ENCODE measurements at regions of chr14 and their contacts with region 1.

Region 1: DNA sequence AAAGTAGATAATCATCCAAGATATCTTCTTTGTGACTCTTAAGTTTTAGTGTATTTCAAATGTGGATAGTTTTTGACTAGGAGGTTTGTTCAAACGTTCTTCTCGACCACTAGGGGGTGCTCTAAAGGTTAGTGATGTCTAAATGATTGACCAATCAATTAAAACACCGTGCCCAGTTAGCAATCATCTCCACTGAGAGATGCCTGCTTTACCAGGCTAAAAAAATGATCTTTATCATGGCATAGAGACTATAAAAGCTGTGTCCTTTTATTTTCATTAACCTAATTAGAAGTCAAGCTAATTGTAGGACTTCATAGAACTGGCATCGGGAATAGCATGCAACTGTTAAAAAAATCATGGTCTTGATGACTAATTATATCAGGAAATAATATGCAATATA is 153.9 kb downstream of the PRKCH start:
- DNase-seq: peak in 3 of 5 donors; percentile 38 to 52 (median 40)
- H3K4me3 ChIP-seq: no peak overlapping the region
- H3K4me3 Mint-ChIP-seq: peak overlapping the region in 6 of 8 donors; percentile 25 to 81 (median 48)
- H3K27ac ChIP-seq: peak overlapping the region; percentile 87
- H3K27ac Mint-ChIP-seq: peak overlapping the region; percentile 87 to 100 (median 93)
- H3K4me1 ChIP-seq: peaks cover 98% of the 10 kb centered on the region
- H3K4me1 Mint-ChIP-seq: peaks cover 76 to 97% (median 92%) of the 10 kb centered on the region in 4 donors
- H3K27me3 ChIP-seq: no peaks in the 10 kb centered on the region
- H3K27me3 Mint-ChIP-seq: no peaks in the 10 kb centered on the region

Region 2: DNA sequence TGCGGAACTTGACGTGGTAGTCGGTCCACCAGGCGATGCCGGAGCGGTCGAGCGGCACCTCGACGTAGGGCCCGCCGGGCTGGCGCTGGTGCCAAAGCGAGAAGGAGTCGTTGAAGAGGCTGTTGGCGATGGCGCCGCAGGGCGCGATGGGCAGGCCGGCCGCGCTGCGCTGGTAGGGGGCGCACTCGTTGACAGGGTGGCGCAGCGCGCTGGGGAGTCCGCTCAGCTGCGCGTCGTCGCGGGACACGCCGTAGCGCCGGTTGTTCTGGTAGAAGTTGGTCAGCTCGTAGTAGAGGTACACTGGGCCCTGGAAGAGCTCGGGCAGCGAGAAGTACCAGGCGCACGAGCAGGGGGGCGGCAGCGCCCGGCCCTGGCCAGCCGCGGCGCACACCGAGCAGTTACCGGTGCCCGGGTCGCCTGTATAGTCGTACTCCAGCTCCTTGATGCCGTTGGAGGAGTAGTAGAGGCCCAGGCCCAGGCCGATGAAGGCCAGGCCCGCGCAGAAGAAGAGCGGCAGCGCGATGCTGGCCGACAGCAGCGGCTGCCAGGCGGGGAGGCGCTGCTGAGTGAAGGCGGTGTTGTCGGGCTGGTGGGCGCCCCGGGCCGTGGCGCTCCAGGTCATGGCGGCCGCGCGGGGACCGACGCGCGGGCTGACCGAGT is 194.7 kb before region 1 on chr14:
- CTCF ChIA-PET with region 1: interaction called, 3 read pairs
- POLR2A ChIA-PET with region 1: interaction called, 10 read pairs
- intact Hi-C with region 1: no loop called
- DNase-seq: peak; percentile 73 to 81 (median 78)
- H3K4me3 ChIP-seq: peak overlapping the region; percentile 45 to 76
- H3K4me3 Mint-ChIP-seq: peak overlapping the region; percentile 90 to 95 (median 93)
- H3K27ac ChIP-seq: peak overlapping the region; percentile 65
- H3K27ac Mint-ChIP-seq: peak overlapping the region; percentile 87 to 96 (median 94)
- H3K4me1 ChIP-seq: peaks cover 16% of the 10 kb centered on the region
- H3K4me1 Mint-ChIP-seq: peaks cover 19 to 38% (median 24%) of the 10 kb centered on the region in 4 donors
- H3K27me3 ChIP-seq: no peaks in the 10 kb centered on the region
- H3K27me3 Mint-ChIP-seq: no peaks in the 10 kb centered on the region

Region 3: DNA sequence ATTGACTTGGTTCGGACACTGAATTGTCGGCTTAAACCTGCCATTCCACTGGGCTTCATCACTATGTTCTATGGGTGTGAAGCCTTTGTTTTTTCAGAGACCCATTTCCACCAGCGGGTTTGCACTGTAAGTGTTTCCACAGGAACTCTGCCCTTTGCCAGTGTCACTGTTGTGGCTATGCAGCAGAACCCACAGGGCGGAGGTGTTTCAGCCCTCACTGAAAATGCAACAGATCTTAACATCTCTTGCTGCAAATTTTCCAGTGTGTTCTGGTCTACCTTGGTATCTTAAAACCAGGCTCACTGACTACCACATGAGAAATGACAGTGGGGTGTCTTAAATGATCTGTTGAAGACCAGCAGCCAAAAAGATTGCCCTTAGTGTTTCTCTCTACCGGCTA is 132.8 kb before region 1 on chr14:
- CTCF ChIA-PET with region 1: interaction called, 4 read pairs
- POLR2A ChIA-PET with region 1: interaction called, 11 read pairs
- intact Hi-C with region 1: no loop called
- DNase-seq: peak; percentile 87 to 95 (median 88)
- H3K4me3 ChIP-seq: peak overlapping the region; percentile 25 to 42
- H3K4me3 Mint-ChIP-seq: peak overlapping the region; percentile 72 to 92 (median 82)
- H3K27ac ChIP-seq: peak overlapping the region; percentile 78
- H3K27ac Mint-ChIP-seq: peak overlapping the region; percentile 93 to 98 (median 98)
- H3K4me1 ChIP-seq: peaks cover 97% of the 10 kb centered on the region
- H3K4me1 Mint-ChIP-seq: peaks cover 82 to 95% (median 88%) of the 10 kb centered on the region in 4 donors
- H3K27me3 ChIP-seq: no peaks in the 10 kb centered on the region
- H3K27me3 Mint-ChIP-seq: no peaks in the 10 kb centered on the region

Region 4: GRCh38 chr14:61372842-61373555 is 102.3 kb before region 1 on chr14:
- CTCF ChIA-PET with region 1: no interaction called
- POLR2A ChIA-PET with region 1: no interaction called
- intact Hi-C with region 1: no loop called
- DNase-seq: no peak
- H3K4me3 ChIP-seq: no peak overlapping the region
- H3K4me3 Mint-ChIP-seq: peak overlapping the region in 6 of 8 donors; percentile 15 to 74 (median 38)
- H3K27ac ChIP-seq: no peak overlapping the region
- H3K27ac Mint-ChIP-seq: peak overlapping the region in 6 of 7 donors; percentile 1 to 93 (median 70)
- H3K4me1 ChIP-seq: peaks cover 83% of the 10 kb centered on the region
- H3K4me1 Mint-ChIP-seq: peaks cover 43 to 73% (median 59%) of the 10 kb centered on the region in 4 donors
- H3K27me3 ChIP-seq: no peaks in the 10 kb centered on the region
- H3K27me3 Mint-ChIP-seq: no peaks in the 10 kb centered on the region

Region 5: DNA sequence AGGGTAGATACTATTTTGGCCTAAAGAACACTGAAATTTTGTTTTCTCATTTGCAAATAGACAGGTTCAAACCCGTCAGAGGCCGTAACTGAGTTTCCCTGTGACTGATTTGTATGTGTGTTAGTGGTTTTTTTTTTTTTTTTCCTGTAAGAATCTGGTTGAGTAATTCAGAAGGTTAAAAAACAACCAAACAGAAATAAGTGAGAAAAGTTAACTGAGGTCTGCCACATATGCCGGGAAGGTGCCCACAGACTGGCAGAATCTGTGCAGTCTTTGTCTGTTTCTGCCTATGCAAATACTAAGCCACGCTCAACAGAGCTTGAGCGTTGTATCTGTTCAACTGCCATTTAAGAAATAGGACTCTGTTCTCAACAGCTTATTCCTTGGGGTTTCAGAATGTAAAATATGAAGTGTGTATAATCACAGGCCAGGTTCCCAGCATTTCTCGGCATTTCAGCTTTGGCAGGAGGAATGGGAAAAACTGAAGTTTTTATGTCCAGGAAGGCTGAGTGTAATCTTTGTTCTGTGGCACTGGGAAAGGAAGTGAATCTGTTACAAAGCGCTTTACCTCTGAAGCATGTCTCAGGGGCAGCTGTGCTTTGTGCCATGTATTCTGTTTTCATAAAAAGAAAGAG is 28.0 kb after region 1 on chr14:
- CTCF ChIA-PET with region 1: interaction called, 66 read pairs
- POLR2A ChIA-PET with region 1: interaction called, 81 read pairs
- intact Hi-C with region 1: loop called (anchors 1 kb)
- DNase-seq: peak; percentile 58 to 76 (median 64)
- H3K4me3 ChIP-seq: no peak overlapping the region
- H3K4me3 Mint-ChIP-seq: peak overlapping the region; percentile 53 to 86 (median 76)
- H3K27ac ChIP-seq: peak overlapping the region; percentile 55
- H3K27ac Mint-ChIP-seq: peak overlapping the region in 6 of 7 donors; percentile 96 to 100 (median 98)
- H3K4me1 ChIP-seq: peaks cover 100% of the 10 kb centered on the region
- H3K4me1 Mint-ChIP-seq: peaks cover 68 to 99% (median 89%) of the 10 kb centered on the region in 4 donors
- H3K27me3 ChIP-seq: no peaks in the 10 kb centered on the region
- H3K27me3 Mint-ChIP-seq: no peaks in the 10 kb centered on the region

Region 6: DNA sequence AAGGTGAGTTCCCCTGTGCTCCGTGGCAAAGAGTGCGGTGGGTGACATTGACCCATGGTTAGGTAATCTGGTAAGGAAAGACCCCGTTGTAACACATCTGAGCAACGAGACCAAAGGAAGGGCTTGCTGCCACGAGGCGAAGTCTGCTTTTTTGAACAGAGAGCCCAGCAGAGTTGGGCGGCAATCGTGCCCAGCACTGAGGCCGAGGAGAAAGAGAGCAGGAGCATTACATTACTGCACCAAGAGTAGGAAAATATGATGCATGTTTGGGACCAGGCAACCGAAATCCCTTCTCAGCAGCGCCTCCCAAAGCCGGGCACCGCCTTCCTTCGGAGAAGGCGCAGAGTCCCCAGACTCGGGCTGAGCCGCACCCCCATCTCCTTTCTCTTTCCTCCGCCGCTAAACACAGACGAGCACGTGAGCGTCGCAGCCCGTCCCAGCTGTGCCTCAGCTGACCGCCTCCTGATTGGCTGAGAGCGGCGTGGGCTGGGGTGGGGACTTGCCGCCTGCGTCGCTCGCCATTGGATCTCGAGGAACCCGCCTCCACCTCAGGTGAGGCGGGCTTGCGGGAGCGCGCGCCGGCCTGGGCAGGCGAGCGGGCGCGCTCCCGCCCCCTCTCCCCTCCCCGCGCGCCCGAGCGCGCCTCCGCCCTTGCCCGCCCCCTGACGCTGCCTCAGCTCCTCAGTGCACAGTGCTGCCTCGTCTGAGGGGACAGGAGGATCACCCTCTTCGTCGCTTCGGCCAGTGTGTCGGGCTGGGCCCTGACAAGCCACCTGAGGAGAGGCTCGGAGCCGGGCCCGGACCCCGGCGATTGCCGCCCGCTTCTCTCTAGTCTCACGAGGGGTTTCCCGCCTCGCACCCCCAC is 219.7 kb after region 1 on chr14 and contains the start of gene HIF1A:
- CTCF ChIA-PET with region 1: interaction called, 6 read pairs
- POLR2A ChIA-PET with region 1: interaction called, 36 read pairs
- intact Hi-C with region 1: loop called (anchors 1 kb)
- DNase-seq: peak; percentile 94 to 98 (median 97)
- H3K4me3 ChIP-seq: peak within 1 kb of the TSS; percentile 74 to 92
- H3K4me3 Mint-ChIP-seq: peak within 1 kb of the TSS; percentile 90 to 99 (median 97)
- H3K27ac ChIP-seq: peak within 1 kb of the TSS; percentile 88
- H3K27ac Mint-ChIP-seq: peak within 1 kb of the TSS; percentile 94 to 98 (median 97)
- H3K4me1 ChIP-seq: peaks cover 51% of the 10 kb centered on the region
- H3K4me1 Mint-ChIP-seq: peaks cover 33 to 70% (median 48%) of the 10 kb centered on the region in 4 donors
- H3K27me3 ChIP-seq: no peaks in the 10 kb centered on the region
- H3K27me3 Mint-ChIP-seq: no peaks in the 10 kb centered on the region
- total RNA-seq, gene HIF1A: 84.7 to 87.1 TPM

Region 7: DNA sequence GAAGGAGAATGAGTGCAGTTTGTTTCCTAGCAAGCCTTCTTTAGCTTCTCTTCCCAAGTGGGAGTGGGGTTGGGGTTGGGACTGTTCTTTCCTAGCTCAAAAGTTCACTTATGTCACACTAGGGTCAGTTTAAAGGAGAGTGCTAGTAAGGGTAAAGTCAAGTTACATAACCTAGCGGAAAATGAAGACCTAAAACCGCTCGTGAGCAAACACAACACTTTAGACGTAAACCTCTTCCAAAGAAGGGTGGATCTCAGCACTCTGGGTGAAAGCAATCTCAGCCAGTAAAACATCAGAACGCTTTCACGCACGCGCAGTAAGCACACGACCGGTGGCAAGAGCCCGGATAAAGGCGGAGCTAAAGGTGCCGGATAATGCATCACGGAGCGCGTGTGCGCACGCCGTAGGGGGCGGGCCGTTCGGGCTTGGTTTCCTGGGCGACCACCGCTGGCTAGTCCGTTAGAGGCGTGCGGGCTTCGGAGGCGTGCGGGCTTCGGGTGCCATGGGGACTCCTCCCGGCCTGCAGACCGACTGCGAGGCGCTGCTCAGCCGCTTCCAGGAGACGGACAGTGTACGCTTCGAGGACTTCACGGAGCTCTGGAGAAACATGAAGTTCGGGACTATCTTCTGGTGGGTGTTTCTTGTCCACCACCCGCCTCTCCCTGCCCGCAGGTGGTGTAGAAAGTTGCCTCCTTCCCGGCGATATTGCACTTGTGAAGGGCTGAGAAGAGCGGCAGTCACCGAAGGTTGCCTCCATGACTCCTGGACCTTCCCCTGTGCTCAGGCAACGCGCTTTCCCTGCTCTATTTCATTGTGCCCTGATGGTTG is 286.9 kb after region 1 on chr14 and contains the start of gene SNAPC1:
- CTCF ChIA-PET with region 1: interaction called, 5 read pairs
- POLR2A ChIA-PET with region 1: interaction called, 28 read pairs
- intact Hi-C with region 1: loop called (anchors 1 kb)
- DNase-seq: peak; percentile 96 to 98 (median 97)
- H3K4me3 ChIP-seq: peak within 1 kb of the TSS; percentile 80 to 85
- H3K4me3 Mint-ChIP-seq: peak within 1 kb of the TSS; percentile 96 to 100 (median 99)
- H3K27ac ChIP-seq: peak within 1 kb of the TSS; percentile 90
- H3K27ac Mint-ChIP-seq: peak within 1 kb of the TSS; percentile 99 to 100 (median 100)
- H3K4me1 ChIP-seq: peaks cover 38% of the 10 kb centered on the region
- H3K4me1 Mint-ChIP-seq: peaks cover 25 to 54% (median 31%) of the 10 kb centered on the region in 4 donors
- H3K27me3 ChIP-seq: no peaks in the 10 kb centered on the region
- H3K27me3 Mint-ChIP-seq: no peaks in the 10 kb centered on the region
- total RNA-seq, gene SNAPC1: 4.0 to 4.2 TPM

Measured in CD4-positive, alpha-beta memory T cell (primary cell).